Endothelial cell of umbilical vein (primary cell): ENCODE measurements at regions of chr6 and their contacts with region 1.

Region 1: DNA sequence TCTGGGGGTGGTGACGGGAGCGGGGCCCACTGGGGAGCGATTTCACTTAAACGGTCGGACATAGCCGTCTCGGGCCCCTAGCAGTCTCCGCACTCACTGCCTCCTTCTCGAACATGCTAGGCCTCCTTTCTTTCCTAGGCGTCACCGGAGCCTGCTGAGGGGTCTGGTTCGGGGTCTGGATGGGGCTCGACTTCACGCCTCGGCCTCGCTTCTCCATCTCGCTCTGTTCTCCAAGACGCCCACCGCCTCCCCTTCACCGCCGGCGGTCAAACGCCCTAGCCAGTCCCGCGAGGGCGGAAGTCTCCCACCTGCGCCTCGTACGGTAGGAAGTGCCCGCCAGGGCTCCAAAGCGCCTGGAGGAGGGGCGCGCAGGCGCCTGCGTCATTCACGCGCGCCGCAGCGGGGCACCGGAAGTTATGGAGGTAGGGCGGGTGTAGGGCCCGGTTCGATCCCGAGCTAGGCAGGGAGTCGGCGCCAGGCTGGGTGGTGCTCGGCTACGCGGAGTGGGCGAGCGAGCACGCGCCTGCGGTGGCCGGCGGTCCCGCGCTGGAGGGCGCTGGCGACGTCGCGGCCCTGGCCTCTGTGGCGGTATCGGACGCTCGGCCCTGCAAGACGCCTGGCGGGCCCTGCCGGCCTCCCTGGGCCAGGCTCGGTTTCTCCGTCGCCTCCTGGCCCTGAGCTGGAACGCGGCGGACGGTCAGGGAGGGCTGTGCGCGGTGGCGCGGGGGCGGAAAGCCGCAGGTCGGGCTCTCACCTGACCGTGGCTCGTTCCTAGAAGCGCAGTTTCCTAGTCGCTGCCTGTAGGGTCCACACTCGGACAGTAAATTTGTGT is at the starts of genes DYNLT2 and ERMARD:
- DNase-seq: peak; percentile 96
- H3K4me3 ChIP-seq: peak within 1 kb of the TSS; percentile 62 to 95 (median 92)
- H3K27ac ChIP-seq: peak within 1 kb of the TSS; percentile 83
- H3K4me1 ChIP-seq: peaks cover 14% of the 10 kb centered on the region
- H3K27me3 ChIP-seq: no peaks in the 10 kb centered on the region
- CTCF ChIP-seq: peak in 1 of 2 donors; percentile 23
- POLR2A ChIP-seq: peak; percentile 87
- total RNA-seq, gene DYNLT2: 0.88 and 1.5 TPM in 2 replicates
- total RNA-seq, gene ERMARD: 18.8 and 23.8 TPM in 2 replicates

Region 2: GRCh38 chr6:169212897-169213813 is 538.3 kb before region 1 on chr6:
- CTCF ChIA-PET with region 1: no interaction called
- POLR2A ChIA-PET with region 1: no interaction called
- dilution Hi-C with region 1: no loop called
- intact Hi-C with region 1: loop called (anchors 5 kb)
- DNase-seq: peak; percentile 83
- H3K4me3 ChIP-seq: peak overlapping the region in 2 of 3 experiments; percentile 4 to 30
- H3K27ac ChIP-seq: peak overlapping the region; percentile 32
- H3K4me1 ChIP-seq: peaks cover 5% of the 10 kb centered on the region
- H3K27me3 ChIP-seq: no peaks in the 10 kb centered on the region
- CTCF ChIP-seq: peak; percentile 12 to 43
- POLR2A ChIP-seq: peak; percentile 21

Region 3: GRCh38 chr6:169669889-169670288 is 81.6 kb before region 1 on chr6:
- CTCF ChIA-PET with region 1: no interaction called
- POLR2A ChIA-PET with region 1: no interaction called
- dilution Hi-C with region 1: no loop called
- intact Hi-C with region 1: loop called (anchors 1 kb)
- DNase-seq: peak; percentile 98
- H3K4me3 ChIP-seq: no peak overlapping the region
- H3K27ac ChIP-seq: peak overlapping the region; percentile 98
- H3K4me1 ChIP-seq: peaks cover 26% of the 10 kb centered on the region
- H3K27me3 ChIP-seq: no peaks in the 10 kb centered on the region
- CTCF ChIP-seq: no peak
- POLR2A ChIP-seq: no peak